ENCODE measurements at regions of chr9 and their contacts with region 1.

Region 1: DNA sequence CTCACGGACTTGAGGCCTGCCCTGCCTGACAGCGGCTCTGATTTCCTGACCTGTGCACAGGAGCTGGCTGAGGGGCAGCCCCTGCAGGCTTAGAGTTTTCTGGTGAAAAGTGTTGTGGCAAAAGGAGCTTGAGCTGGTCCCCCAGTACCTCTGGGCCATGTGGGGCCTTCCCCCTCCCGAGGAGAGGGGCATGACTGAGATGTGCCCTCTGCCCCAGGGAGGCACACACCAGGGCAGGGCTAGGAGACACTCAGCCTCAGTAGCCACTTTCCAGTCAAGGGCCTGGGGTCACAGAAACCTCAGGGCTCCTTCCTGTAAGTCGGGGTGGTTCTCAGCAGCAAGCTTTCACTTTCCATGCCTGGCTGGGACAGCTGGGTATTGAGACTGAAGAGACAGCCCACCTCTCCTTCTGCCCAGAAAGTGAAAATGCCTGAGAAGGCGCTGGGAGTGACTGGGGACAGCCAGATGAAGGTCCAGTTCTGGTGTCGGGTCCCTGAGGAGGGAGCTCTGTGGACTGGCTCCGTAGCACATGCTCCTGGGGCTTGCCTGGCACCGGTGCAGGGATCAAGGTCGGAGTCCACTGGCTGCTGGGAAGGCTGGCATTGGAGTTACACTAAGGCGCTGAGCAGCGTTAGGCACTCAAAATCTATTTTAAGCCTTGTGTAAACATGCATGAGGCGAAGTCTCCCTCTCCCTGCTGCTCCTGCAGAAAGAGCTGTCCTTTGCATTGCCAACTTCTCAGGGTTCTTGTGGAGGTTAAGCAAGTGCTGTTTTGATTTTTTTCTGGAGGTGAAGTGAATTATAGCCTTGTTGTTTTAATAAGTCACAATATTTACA is 394.9 kb downstream of the GADD45G start:
- DNase-seq: peak; percentile 85
- ATAC-seq: peak; percentile 88

Region 2: DNA sequence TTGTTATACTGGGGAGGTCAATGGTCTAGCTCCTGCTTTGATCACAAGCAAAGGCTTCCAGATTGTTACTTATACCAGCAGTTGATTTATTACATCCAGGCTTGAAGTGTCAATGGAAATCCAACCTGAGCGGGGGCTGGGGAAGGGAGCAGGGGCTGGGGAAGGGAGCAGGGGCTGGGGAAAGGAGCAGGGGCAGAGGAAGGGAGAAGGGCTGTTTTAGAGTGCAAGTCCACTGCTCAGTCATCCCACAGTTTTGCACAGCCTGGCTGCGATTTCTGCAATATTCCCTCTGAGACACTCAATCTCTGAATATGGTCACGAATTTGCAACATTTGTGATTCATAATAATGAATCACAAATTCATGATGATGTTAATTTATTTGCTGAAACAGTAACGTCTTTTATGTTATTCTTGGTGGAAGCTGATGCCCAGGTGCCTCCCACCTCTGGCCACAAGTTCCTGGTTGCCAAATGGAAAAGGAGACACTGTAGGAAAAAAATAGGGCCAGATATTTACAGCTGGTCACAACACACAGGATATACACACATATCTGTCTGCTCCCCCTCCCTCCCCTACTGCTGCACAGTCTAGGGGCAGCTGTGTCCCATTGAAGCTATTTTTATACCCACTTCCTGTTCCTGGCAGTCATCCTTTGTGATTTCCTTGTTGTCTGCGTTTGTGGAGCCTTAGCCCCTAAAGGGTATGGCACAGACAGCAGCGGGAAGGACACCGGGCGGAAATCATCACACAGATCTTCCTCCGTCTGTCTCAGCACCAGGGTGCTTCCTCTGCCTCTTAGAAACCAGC is 69.9 kb before region 1 on chr9:
- intact Hi-C with region 1: loop called (anchors 5 kb)
- DNase-seq: peak; percentile 45
- ATAC-seq: peak; percentile 80

Region 3: DNA sequence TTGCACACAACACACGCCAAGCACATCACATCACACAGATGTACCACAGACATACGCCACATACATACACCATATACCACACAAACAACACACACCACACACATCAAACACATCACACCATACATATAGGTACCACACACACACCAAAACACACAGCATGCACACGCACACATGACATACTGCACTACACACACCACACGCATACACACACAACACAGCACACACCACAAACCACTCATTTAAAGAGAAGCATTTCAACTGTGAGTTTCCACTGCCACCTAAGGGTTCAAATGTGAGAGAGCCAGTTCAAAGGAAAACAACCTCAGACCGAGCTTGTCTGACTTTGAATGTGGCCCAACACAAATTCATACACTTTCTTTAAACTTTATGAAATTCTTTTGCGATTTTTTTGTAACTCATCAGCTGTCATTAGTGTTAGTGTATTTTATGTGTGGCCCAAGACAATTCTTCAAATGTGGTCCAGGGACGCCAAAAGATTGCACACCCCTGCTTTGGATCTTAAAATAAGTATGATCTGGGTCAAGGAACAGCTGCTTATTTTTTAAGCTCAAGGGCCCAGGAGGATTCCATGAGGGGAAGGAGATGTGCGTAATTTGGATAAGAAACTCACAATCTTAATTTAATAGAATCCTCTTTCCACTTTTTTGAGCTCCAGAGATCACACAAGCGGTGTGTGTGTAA is 99.7 kb after region 1 on chr9:
- intact Hi-C with region 1: loop called (anchors 10 kb)
- DNase-seq: no peak
- ATAC-seq: peak; percentile 56

Region 4: GRCh38 chr9:90251316-90251715 is 251.6 kb after region 1 on chr9:
- intact Hi-C with region 1: no loop called
- DNase-seq: no peak
- ATAC-seq: no peak

Measured in Right ventricle myocardium superior (tissue), 1 donor.